Activated T-helper 1 cell treated with anti-CD3 and anti-CD28 coated beads, Interleukin-12 subunit alpha, Interleukin-12 subunit beta, Interleukin-2, Interleukin-4 antibody, amounts not matched to agents 30 ng/mL and 10 ng/mL and 1 ng/mL, durations not matched to agents 14 hours and 24 hours and 36 hours (primary cell): ENCODE measurements at regions of chr13 and their contacts with region 1.

Region 1: DNA sequence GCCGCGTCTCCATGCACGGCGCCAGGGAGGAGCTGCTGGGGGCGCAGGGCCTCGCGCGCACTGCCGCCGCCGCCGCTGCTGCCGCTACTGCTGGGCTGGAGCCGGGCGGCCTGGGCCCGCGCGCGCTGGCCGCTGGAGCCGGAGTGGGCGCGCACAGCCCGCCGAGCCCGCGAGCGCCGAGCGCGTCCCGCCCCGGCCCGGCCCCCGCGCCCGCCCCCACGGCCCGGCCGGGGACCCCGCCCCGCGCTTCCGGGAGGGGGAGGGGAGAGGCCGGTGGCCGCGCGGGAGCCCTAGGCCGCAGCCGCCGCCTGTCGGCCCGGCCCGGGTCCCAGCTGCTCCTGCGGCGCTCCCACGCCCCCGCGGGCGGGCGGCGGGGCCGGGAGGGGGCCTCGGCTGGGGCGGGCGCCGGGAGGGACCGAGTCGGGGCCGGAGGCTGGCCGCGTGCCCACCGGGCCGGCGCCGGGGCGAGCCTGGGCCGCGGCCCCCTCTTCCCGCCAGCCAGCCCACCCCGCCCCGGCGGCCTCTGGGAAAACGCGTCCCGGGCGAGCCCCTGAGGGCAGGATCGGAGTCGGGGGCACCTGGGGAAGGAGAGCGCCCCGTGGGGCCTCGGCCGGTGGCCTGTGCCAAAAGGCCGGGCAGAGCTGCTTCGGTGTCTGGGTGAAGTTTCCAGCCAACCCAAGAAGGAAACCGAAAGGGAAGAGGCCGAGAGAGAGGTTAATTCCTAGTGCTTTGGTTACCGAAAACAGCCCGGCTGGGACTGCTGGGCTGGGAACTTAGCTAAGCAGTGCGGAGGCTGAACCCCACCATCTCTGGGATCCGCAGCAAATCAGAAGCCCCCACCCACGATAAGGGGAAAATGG is at the start of gene STK24:
- DNase-seq: peak; percentile 66
- H3K4me3 Mint-ChIP-seq: peak within 1 kb of the TSS; percentile 98
- H3K27ac Mint-ChIP-seq: peak within 1 kb of the TSS; percentile 86
- H3K4me1 Mint-ChIP-seq: peaks cover 45% of the 10 kb centered on the region
- H3K27me3 Mint-ChIP-seq: no peaks in the 10 kb centered on the region
- total RNA-seq, gene STK24: 135 and 139 TPM in 2 replicates

Region 2: GRCh38 chr13:97221989-97222700 is 1355.0 kb before region 1 on chr13 and contains the start of gene MBNL2:
- intact Hi-C with region 1: loop called (anchors 10 kb)
- DNase-seq: peak; percentile 80
- H3K4me3 Mint-ChIP-seq: peak within 1 kb of the TSS; percentile 87
- H3K27ac Mint-ChIP-seq: peak within 1 kb of the TSS; percentile 82
- H3K4me1 Mint-ChIP-seq: peaks cover 49% of the 10 kb centered on the region
- H3K27me3 Mint-ChIP-seq: no peaks in the 10 kb centered on the region
- total RNA-seq, gene MBNL2: 20.7 and 24.2 TPM in 2 replicates

Region 3: GRCh38 chr13:98517576-98518310 is 59.5 kb before region 1 on chr13:
- intact Hi-C with region 1: loop called (anchors 1 kb)
- DNase-seq: peak; percentile 40
- H3K4me3 Mint-ChIP-seq: peak overlapping the region; percentile 27
- H3K27ac Mint-ChIP-seq: peak overlapping the region; percentile 79
- H3K4me1 Mint-ChIP-seq: peaks cover 91% of the 10 kb centered on the region
- H3K27me3 Mint-ChIP-seq: no peaks in the 10 kb centered on the region

Region 4: DNA sequence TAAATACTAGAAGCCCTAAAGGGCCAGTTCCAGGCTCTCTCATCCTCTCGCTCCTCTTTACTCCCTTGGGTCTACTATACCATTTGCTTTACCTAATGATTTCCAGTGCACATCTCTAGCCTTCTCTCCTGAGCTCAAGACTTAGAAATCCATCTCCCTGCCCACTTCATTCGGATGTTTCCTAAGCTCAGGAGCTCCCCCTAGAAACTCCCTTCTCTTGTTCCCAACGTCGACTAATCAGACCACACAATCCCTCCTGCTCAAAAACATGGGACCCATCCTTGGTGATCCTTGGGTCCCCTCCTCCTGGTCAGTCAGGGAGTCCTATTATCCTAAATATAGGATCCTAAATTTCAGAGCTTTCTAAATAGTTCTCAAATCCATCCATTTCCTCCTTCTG is 20.9 kb after region 1 on chr13:
- intact Hi-C with region 1: loop called (anchors 1 kb)
- DNase-seq: no peak
- H3K4me3 Mint-ChIP-seq: no peak overlapping the region
- H3K27ac Mint-ChIP-seq: no peak overlapping the region
- H3K4me1 Mint-ChIP-seq: peaks cover 12% of the 10 kb centered on the region
- H3K27me3 Mint-ChIP-seq: peaks cover 2% of the 10 kb centered on the region

Region 5: DNA sequence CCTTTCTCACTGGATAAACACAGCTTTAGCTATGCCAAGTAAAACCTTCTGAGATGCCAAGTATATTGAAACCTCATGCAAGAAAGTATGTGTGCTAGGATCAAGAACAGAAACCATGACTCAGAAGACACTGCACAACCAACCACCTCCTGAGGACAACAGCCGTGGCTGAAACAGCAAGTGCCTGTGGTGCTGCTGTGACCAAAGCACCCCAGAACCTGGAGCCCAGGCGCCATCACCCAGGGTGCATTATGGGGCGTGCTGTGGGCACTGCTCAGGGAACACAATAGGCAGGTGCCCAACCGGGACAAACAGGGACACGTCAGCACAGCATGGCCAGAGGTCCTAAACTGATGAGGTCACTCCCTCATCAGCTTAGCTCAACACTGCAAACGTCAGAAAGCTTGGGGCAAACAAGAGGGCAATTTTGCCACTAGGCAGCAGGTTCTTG is 276.6 kb after region 1 on chr13:
- intact Hi-C with region 1: loop called (anchors 1 kb)
- DNase-seq: peak; percentile 59
- H3K4me3 Mint-ChIP-seq: peak overlapping the region; percentile 36
- H3K27ac Mint-ChIP-seq: peak overlapping the region; percentile 13
- H3K4me1 Mint-ChIP-seq: peaks cover 21% of the 10 kb centered on the region
- H3K27me3 Mint-ChIP-seq: no peaks in the 10 kb centered on the region

Region 6: GRCh38 chr13:99501184-99501847 is 924.1 kb after region 1 on chr13 and contains the start of gene TM9SF2:
- intact Hi-C with region 1: loop called (anchors 10 kb)
- DNase-seq: peak; percentile 95
- H3K4me3 Mint-ChIP-seq: peak within 1 kb of the TSS; percentile 96
- H3K27ac Mint-ChIP-seq: peak within 1 kb of the TSS; percentile 95
- H3K4me1 Mint-ChIP-seq: peaks cover 70% of the 10 kb centered on the region
- H3K27me3 Mint-ChIP-seq: peaks cover 1% of the 10 kb centered on the region
- total RNA-seq, gene TM9SF2: 59.1 and 62.6 TPM in 2 replicates